Kidney (tissue), 22 donors: ENCODE measurements at regions of chr12 and their contacts with region 1.

Region 1: DNA sequence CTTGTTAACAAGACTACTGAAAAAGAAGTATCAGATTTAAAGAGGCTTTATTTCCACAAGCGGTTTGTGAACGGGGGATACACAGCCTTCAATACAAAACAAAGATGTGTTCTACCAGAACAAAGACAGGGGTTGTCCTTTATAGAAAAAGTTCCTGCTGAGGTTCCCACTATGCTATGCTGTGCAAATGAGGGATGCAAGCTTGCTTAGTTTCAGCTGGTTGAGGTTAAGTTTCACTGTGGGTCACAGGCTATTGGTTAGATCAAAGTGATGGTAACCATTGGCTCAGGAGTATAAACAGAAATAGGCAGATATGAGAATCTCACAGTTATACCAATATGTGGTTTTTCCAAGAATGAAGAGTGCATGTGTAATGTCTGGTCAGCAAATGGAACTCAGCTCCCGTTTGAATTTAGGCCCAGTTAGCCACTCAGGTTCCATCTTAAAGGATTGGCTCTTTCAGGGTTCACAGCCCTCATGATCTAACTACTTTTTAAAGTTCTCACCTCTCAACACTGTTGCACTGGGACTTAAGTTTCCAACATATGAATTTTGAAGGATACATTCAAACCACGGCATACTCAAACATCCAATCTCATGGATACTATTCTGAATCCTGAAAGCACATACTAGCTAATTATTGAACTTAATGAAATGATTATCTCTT is 215.4 kb upstream of the DCN start:
- DNase-seq: no peak
- H3K4me3 ChIP-seq: no peak overlapping the region
- H3K27ac ChIP-seq: no peak overlapping the region
- H3K4me1 ChIP-seq: no peaks in the 10 kb centered on the region
- H3K27me3 ChIP-seq: no peaks in the 10 kb centered on the region
- CTCF ChIP-seq: no peak

Region 2: DNA sequence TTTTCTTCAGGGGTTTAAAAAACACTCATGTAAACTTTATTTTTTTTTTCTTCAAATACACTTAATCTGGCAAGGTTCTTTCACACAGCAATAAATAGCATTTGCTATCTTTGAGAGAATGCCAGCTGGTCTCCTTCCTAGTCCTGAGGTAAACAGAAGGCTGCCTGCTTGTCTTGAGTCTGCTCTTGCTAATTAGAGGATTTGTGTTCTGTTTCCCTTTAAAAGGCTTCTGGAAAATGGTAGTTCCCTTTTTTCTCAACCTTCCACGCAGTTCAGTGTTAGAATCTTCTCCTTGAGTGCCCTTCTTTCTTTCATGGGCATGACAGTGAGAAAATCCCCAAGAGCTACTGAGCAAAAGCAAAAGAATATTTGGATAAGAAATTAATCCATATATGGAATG is 123.1 kb before region 1 on chr12:
- intact Hi-C with region 1: no loop called
- DNase-seq: peak in 2 of 5 donors; percentile 47 to 79
- H3K4me3 ChIP-seq: no peak overlapping the region
- H3K27ac ChIP-seq: no peak overlapping the region
- H3K4me1 ChIP-seq: no peaks in the 10 kb centered on the region
- H3K27me3 ChIP-seq: no peaks in the 10 kb centered on the region
- CTCF ChIP-seq: no peak

Region 3: DNA sequence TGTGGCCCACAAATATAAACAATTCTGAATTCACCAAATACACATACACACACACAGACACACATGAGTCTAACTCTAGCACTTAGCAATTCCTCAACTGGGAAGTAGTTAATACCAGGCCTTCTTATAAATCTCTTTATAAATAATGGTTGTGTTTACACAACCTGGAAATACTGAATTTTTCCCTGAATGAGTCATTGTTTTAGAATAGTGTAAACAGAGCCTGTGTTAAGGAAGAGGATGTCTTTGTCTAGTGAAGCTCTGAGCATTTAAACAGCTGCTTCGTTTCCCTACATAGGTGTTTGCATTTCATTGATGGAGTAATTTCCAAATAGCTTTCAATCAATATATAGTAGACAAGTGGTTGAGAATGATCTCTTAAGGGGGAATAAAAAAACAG is 528.8 kb after region 1 on chr12:
- intact Hi-C with region 1: loop called (anchors 10 kb)
- DNase-seq: no peak
- H3K4me3 ChIP-seq: no peak overlapping the region
- H3K27ac ChIP-seq: no peak overlapping the region
- H3K4me1 ChIP-seq: no peaks in the 10 kb centered on the region
- H3K27me3 ChIP-seq: no peaks in the 10 kb centered on the region
- CTCF ChIP-seq: no peak